Ascending aorta (tissue), 2 donors: ENCODE measurements at regions of chr3 and their contacts with region 1.

Region 1: GRCh38 chr3:27712136-27713077 is 9.7 kb downstream of the EOMES start:
- DNase-seq: peak in 1 of 2 donors; percentile 87
- H3K4me3 ChIP-seq: peak overlapping the region; percentile 57 to 73
- H3K27ac ChIP-seq: no peak overlapping the region
- H3K4me1 ChIP-seq: peaks cover 10 to 19% of the 10 kb centered on the region in 2 donors
- H3K27me3 ChIP-seq: peaks cover 15% of the 10 kb centered on the region
- CTCF ChIP-seq: peak; percentile 53 to 81 (median 80)

Region 2: DNA sequence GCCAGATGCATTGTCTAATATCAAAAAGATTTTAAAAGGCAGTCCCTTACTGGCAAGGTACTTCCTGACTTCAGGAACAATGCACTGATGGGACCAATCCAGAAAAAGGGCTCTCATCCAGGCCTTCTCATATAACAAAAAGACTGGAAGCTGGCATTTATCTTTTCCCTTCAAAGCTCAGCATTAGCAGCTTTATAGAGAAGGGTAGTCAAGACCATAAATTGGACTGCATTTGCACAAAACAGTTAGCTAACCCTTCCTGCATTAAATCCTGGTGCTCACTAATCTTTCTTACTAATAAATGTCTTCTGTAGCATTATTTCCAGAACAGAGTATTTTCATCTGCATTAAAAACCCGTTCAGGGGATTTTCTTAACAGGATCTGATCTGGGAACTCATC is 297.2 kb before region 1 on chr3:
- intact Hi-C with region 1: no loop called
- DNase-seq: no peak
- H3K4me3 ChIP-seq: no peak overlapping the region
- H3K27ac ChIP-seq: no peak overlapping the region
- H3K4me1 ChIP-seq: no peaks in the 10 kb centered on the region
- H3K27me3 ChIP-seq: no peaks in the 10 kb centered on the region
- CTCF ChIP-seq: no peak

Region 3: DNA sequence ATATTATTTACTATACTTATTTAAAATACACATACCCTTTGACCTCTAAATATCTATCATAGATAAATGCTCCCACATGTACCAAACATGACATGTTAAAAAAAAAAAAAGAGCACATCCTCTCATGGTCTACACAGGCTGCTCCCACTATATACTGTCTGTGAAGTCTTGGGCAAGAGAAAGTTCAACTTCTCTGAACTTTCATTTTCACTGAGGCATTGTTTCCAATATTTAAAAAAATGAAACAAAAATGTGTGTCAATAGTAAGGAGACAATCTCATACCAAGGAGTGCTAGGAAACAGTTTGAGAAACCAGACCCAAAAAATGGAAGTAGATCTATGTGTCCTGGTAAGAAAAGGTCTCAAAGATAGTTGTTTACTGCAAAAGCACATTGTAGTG is 257.5 kb before region 1 on chr3:
- intact Hi-C with region 1: no loop called
- DNase-seq: no peak
- H3K4me3 ChIP-seq: no peak overlapping the region
- H3K27ac ChIP-seq: no peak overlapping the region
- H3K4me1 ChIP-seq: peaks cover 0 to 6% of the 10 kb centered on the region in 2 donors
- H3K27me3 ChIP-seq: no peaks in the 10 kb centered on the region
- CTCF ChIP-seq: no peak

Region 4: DNA sequence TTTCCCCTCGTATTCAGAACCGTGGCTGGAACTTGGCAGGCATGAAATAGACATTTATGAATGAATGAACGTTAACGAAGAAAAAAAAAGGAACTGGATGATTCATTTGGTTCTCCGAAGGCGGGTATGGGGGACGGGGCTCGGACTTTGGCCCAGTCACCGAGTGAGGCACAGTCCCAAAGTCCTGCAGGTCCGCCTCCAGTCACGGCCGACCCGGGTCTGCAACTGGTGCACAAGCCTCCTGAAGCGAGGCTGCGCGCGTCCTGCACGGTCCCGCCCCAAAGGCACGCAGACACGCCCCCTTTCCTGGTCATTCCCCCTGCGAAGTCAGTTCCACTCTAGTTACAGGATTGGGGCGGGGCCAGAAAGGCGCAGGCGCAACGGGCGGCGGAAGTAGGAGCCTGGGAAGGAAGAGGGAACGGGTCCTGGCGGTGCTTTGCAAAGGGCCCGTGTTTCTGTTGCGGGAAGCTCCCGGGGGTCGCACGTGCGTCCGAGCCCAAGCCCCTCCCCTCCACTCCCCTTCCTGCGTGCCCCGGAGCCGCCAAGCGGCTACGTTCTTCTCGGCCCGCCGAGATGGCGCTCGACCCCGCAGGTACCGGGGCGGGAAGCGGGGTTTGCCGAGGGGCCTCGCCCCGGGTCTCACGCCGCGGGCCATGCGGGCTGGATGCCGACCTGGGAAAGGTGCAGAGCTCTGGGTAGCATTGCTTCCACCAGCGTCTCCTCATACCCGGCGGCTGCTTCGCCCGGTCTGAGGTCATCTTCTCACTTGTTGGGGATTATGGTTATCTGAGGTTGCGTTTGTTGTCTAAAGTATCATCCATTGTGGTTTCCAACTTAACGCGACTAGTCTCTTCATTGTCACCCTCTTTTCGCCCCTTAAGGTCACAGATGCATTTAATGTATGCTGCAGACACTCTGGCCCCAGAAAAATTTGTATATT is 529.1 kb after region 1 on chr3 and contains the start of gene CMC1:
- intact Hi-C with region 1: loop called (anchors 10 kb)
- DNase-seq: peak; percentile 94 to 99
- H3K4me3 ChIP-seq: peak within 1 kb of the TSS; percentile 85 to 88
- H3K27ac ChIP-seq: peak within 1 kb of the TSS; percentile 67 to 79
- H3K4me1 ChIP-seq: peaks cover 5 to 12% of the 10 kb centered on the region in 2 donors
- H3K27me3 ChIP-seq: no peaks in the 10 kb centered on the region
- CTCF ChIP-seq: no peak
- total RNA-seq, gene CMC1: 68.5 TPM

Region 5: DNA sequence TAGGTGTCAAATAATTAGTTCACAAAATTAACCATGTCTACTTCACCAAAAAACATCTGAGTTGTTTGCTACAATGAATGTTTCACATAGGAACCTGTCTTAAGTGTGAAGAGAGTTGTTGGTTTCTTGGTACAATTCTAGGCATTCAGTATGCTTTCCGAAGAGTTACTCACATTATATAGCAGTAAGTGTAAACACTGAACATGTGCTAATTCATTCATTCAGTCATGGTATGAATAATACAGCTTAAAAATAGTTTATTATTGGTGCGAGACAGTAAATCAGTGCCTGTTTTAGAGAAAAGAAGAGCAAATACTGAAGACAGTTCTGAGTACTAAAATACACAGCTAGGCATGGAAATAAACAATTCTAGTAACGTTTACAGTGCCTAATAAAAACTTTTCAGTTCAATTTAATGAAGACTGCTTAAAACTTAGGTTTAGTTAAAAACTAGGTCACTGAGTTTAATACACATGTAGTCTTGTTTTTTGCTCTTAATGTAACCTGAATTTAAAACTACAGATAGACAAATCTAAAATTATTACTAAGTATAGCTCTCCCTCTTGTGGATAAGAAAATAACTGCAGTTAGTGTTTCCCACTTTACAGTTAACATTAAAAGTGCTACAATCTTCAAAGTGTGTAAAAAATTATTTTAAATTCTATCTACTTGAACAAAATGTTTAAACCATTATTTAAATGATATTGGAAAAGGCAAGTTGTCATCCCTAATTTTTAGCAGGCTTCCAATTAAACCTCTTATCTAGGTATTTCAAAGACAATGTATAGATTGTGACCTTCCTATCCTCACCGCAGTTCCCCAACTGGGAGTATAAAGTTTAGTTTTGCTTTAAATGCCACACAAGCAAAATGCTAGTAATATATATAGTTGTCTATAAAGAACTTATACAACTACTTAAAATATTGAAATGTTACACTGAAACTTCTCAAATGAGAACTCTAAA is 616.1 kb after region 1 on chr3:
- intact Hi-C with region 1: loop called (anchors 5 kb)
- DNase-seq: no peak
- H3K4me3 ChIP-seq: no peak overlapping the region
- H3K27ac ChIP-seq: no peak overlapping the region
- H3K4me1 ChIP-seq: no peaks in the 10 kb centered on the region
- H3K27me3 ChIP-seq: no peaks in the 10 kb centered on the region
- CTCF ChIP-seq: peak; percentile 53 to 66 (median 60)